ENCODE measurements at regions of chr10 and their contacts with region 1.

Region 1: GRCh38 chr10:124092860-124093773 is at the start of gene CHST15:
- DNase-seq: peak; percentile 83
- ATAC-seq: peak; percentile 65
- H3K4me3 ChIP-seq: peak within 1 kb of the TSS; percentile 87
- H3K27ac ChIP-seq: peak within 1 kb of the TSS; percentile 46
- H3K4me1 ChIP-seq: peaks cover 14% of the 10 kb centered on the region
- H3K27me3 ChIP-seq: no peaks in the 10 kb centered on the region
- CTCF ChIP-seq: peak; percentile 32
- total RNA-seq, gene CHST15: 16.4 and 17.1 TPM in 2 replicates

Region 2: GRCh38 chr10:123666318-123667236 is 426.5 kb before region 1 on chr10 and contains the start of gene GPR26:
- CTCF ChIA-PET with region 1: no interaction called
- POLR2A ChIA-PET with region 1: no interaction called
- intact Hi-C with region 1: no loop called
- DNase-seq: no peak
- ATAC-seq: no peak
- H3K4me3 ChIP-seq: no peak within 1 kb of the TSS
- H3K27ac ChIP-seq: no peak within 1 kb of the TSS
- H3K4me1 ChIP-seq: no peaks in the 10 kb centered on the region
- H3K27me3 ChIP-seq: peaks cover 13% of the 10 kb centered on the region
- CTCF ChIP-seq: no peak
- total RNA-seq, gene GPR26: not detected in 2 replicates

Region 3: GRCh38 chr10:123678376-123678775 is 414.7 kb before region 1 on chr10:
- CTCF ChIA-PET with region 1: no interaction called
- POLR2A ChIA-PET with region 1: no interaction called
- intact Hi-C with region 1: no loop called
- DNase-seq: no peak
- ATAC-seq: no peak
- H3K4me3 ChIP-seq: no peak overlapping the region
- H3K27ac ChIP-seq: no peak overlapping the region
- H3K4me1 ChIP-seq: no peaks in the 10 kb centered on the region
- H3K27me3 ChIP-seq: peaks cover 36% of the 10 kb centered on the region
- CTCF ChIP-seq: 0 out of 2 replicates have a peak, but pooled peaks have one; percentile 9

Region 4: DNA sequence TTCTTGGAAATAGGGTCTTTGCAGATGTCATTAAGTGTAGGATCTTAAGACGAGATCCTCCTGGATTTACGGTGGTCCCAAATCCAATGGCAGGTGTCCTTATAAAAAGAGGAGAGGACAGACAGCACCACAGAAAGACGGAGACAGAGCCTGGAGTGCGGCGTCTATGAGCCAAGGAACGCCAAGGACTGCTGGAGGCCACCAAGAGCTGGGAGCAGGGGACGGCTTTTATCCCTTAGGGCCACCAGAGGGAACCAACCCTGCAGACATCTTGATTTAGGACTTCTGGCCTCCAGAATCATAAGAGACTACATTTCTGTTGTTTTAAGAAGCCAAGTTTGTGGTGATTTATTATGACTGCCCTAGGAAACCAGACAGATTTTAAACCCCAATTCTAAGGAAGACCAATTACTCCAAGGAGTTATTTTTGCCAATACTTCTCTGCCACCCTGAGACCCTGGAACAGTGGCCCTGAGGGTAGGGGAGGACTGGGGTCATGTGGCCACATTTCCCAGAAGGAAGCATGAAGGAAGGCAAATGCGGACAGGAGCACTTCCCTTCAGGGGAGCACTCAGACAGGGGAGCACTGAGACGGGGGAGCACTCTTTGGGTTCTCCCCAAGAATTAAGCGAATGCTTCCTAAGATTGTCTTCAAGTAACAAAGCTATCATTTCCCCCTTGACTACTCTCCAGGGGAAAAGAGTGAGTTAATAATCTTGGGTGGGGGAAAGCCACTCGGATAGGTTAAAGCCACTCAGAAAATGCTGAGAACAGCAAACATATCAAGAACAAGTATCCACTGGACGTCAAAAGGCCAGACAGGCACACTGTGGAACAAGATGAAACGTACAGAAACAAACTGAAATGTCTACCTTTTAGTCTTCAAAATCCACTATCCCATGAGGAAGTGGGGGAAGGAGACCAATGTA is 67.2 kb before region 1 on chr10:
- CTCF ChIA-PET with region 1: no interaction called
- POLR2A ChIA-PET with region 1: no interaction called
- intact Hi-C with region 1: loop called (anchors 5 kb)
- DNase-seq: peak; percentile 38
- ATAC-seq: peak; percentile 43; the same call in 1 of the 2 replicates
- H3K4me3 ChIP-seq: no peak overlapping the region
- H3K27ac ChIP-seq: no peak overlapping the region
- H3K4me1 ChIP-seq: peaks cover 7% of the 10 kb centered on the region
- H3K27me3 ChIP-seq: no peaks in the 10 kb centered on the region
- CTCF ChIP-seq: peak; percentile 57

Region 5: DNA sequence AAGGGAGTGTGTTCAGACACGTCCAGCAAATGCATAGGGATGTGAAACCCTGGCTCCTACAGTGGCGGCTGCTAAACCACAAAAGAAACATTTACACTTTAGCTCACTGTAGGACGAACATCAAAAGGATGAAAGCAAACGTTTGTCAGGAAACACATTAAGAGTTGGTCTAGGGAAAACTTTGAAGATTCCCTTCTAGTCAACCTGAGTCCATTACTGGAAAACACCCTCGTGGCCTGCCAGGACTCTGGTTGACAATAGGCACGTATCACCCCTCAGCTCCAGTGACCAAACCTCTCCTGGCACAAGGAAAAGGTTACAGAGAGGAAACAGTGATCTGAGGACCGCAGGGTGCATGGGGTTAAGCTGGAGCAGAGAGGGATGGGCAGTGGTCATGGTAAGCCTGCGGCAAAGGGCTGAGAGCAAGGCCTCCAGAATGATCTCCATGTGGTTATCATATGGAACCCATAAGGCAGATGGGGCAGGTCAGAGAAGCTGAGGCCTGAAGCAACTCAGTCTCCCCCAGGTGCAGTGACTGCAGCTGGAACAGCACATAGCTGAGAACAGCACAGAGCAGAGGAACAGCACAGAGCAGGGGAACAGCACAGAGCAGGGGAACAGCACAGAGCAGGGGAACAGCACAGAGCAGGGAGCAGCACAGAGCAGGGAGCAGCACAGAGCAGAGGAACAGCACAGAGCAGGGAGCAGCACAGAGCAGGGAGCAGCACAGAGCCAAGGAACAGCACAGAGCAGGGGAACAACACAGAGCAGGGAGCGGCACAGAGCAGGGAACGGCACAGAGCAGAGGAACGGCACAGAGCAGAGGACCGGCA is 49.6 kb before region 1 on chr10:
- CTCF ChIA-PET with region 1: no interaction called
- POLR2A ChIA-PET with region 1: no interaction called
- intact Hi-C with region 1: no loop called
- DNase-seq: no peak
- ATAC-seq: no peak
- H3K4me3 ChIP-seq: no peak overlapping the region
- H3K27ac ChIP-seq: no peak overlapping the region
- H3K4me1 ChIP-seq: no peaks in the 10 kb centered on the region
- H3K27me3 ChIP-seq: no peaks in the 10 kb centered on the region
- CTCF ChIP-seq: no peak

Region 6: GRCh38 chr10:124063750-124064603 is 29.1 kb before region 1 on chr10:
- CTCF ChIA-PET with region 1: no interaction called
- POLR2A ChIA-PET with region 1: interaction called, 8 read pairs
- intact Hi-C with region 1: loop called (anchors 2 kb)
- DNase-seq: peak; percentile 82
- ATAC-seq: peak; percentile 97
- H3K4me3 ChIP-seq: peak overlapping the region; percentile 54
- H3K27ac ChIP-seq: peak overlapping the region; percentile 93
- H3K4me1 ChIP-seq: peaks cover 29% of the 10 kb centered on the region
- H3K27me3 ChIP-seq: no peaks in the 10 kb centered on the region
- CTCF ChIP-seq: no peak

Region 7: DNA sequence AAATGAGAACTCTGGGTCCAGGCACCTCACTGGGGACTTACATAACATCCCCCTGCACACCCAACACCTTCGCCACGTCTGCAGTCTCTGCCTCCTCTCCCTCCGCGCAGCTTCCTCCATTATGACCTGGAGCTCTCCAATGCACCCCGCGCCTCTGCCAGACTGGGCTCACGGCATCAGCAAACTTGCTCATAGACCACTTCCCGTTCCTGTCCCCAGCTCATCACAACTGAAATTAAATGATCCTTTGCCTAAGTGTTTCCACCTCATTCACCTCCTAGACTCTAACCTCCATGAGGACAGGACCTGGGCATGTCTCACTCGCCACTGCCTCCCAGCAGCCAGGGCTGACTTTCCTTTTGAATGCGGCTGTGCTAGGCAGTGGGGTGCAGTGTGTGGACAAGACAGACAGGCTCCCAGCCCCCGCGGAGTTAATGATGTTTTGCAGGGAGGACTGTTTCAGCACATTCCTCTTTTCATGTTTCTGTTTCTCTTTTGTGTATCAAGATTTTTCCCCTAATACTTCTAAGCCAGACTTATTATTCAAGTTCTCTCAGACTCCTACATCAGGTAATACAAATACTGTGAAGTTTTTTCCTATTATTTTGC is 18.5 kb before region 1 on chr10:
- CTCF ChIA-PET with region 1: no interaction called
- POLR2A ChIA-PET with region 1: no interaction called
- intact Hi-C with region 1: no loop called
- DNase-seq: no peak
- ATAC-seq: no peak
- H3K4me3 ChIP-seq: no peak overlapping the region
- H3K27ac ChIP-seq: no peak overlapping the region
- H3K4me1 ChIP-seq: no peaks in the 10 kb centered on the region
- H3K27me3 ChIP-seq: no peaks in the 10 kb centered on the region
- CTCF ChIP-seq: no peak

Region 8: GRCh38 chr10:124152916-124153826 is 60.1 kb after region 1 on chr10:
- CTCF ChIA-PET with region 1: no interaction called
- POLR2A ChIA-PET with region 1: interaction called, 6 read pairs
- intact Hi-C with region 1: loop called (anchors 1 kb)
- DNase-seq: peak; percentile 95
- ATAC-seq: peak; percentile 77
- H3K4me3 ChIP-seq: peak overlapping the region; percentile 59
- H3K27ac ChIP-seq: peak overlapping the region; percentile 99
- H3K4me1 ChIP-seq: peaks cover 37% of the 10 kb centered on the region
- H3K27me3 ChIP-seq: no peaks in the 10 kb centered on the region
- CTCF ChIP-seq: no peak

Measured in PC-3 (cell line).